ENCODE measurements at regions of chr11 and their contacts with region 1.

Region 1: GRCh38 chr11:106087815-106088435 is 10.5 kb downstream of the AASDHPPT start:
- DNase-seq: peak; percentile 70
- ATAC-seq: no peak
- H3K4me3 Mint-ChIP-seq: no peak overlapping the region
- H3K27ac Mint-ChIP-seq: no peak overlapping the region
- H3K4me1 Mint-ChIP-seq: peaks cover 64% of the 10 kb centered on the region
- H3K27me3 Mint-ChIP-seq: no peaks in the 10 kb centered on the region

Region 2: DNA sequence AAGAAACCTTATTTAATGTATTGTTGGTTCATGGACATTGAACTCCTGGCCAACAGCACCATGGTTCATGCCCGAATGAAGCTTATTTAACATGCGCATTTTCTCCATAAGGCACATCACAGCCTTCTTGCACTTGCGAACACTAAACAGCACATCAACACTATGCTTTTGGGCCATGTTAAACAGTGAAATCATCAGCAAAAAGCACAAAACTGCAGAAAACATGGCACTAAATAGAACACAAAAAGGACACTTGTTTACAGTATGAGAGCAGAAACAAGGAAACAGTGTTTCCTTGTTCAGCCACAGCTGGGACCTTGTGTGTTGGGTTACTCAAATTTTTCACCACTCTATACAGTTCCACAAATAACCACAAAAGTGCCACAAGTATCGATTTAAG is 188.2 kb before region 1 on chr11:
- CTCF ChIA-PET with region 1: no interaction called
- POLR2A ChIA-PET with region 1: no interaction called
- intact Hi-C with region 1: no loop called
- DNase-seq: no peak
- ATAC-seq: no peak
- H3K4me3 Mint-ChIP-seq: no peak overlapping the region
- H3K27ac Mint-ChIP-seq: no peak overlapping the region
- H3K4me1 Mint-ChIP-seq: no peaks in the 10 kb centered on the region
- H3K27me3 Mint-ChIP-seq: peaks cover 2% of the 10 kb centered on the region

Region 3: GRCh38 chr11:106021967-106022794 is 65.7 kb before region 1 on chr11 and contains the start of gene MSANTD4:
- CTCF ChIA-PET with region 1: no interaction called
- POLR2A ChIA-PET with region 1: no interaction called
- intact Hi-C with region 1: loop called in 1 of 2 experiments (anchors 5 kb)
- DNase-seq: peak; percentile 98
- ATAC-seq: peak; percentile 98
- H3K4me3 Mint-ChIP-seq: peak within 1 kb of the TSS; percentile 91
- H3K27ac Mint-ChIP-seq: peak within 1 kb of the TSS; percentile 88
- H3K4me1 Mint-ChIP-seq: peaks cover 35% of the 10 kb centered on the region
- H3K27me3 Mint-ChIP-seq: peaks cover 2% of the 10 kb centered on the region
- total RNA-seq, gene MSANTD4: 12.4 to 13.1 TPM

Region 4: DNA sequence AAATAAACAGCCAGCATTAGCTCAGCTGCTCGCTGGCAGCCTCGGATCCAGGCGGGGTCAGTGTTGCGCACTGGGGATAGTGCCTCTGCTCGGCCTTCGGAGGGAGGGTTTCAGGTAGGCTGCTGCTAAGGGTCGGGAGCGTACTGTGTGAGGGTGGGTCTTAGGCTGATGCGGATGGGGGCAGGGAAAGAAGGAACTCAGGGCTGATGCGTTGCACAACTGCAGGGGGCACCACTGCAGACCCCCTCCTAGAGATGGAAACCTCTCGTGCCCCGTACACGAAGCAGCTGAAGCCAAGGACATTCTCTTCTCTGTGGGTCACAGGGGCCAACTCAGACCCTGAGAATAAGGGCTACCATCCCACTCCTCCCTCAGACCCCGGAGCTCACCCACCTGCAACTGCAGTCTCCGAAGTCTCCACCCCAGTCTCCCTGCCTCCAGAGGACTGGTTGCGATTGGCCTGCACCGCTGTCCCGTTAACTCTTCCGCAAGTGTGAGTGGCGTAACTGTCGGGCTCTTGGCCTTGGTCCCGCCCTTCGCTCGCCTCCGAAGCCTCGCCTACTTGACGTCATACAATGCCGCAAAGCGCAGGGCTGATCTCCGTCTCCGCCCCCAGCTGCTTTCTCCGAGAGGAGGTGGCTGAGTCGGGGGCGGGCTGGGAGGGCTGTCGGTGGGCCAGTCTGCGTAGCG is 10.9 kb before region 1 on chr11 and contains the start of gene KBTBD3:
- CTCF ChIA-PET with region 1: interaction called, 8 read pairs
- POLR2A ChIA-PET with region 1: interaction called, 4 read pairs
- intact Hi-C with region 1: loop called (anchors 1 kb)
- DNase-seq: peak; percentile 99
- ATAC-seq: peak; percentile 97
- H3K4me3 Mint-ChIP-seq: peak within 1 kb of the TSS; percentile 87
- H3K27ac Mint-ChIP-seq: peak within 1 kb of the TSS; percentile 91
- H3K4me1 Mint-ChIP-seq: peaks cover 45% of the 10 kb centered on the region
- H3K27me3 Mint-ChIP-seq: no peaks in the 10 kb centered on the region
- total RNA-seq, gene KBTBD3: 8.9 to 9.1 TPM

Region 5: GRCh38 chr11:106133529-106133928 is 45.6 kb after region 1 on chr11:
- CTCF ChIA-PET with region 1: no interaction called
- POLR2A ChIA-PET with region 1: no interaction called
- intact Hi-C with region 1: loop called in 1 of 2 experiments (anchors 2 kb)
- DNase-seq: no peak
- ATAC-seq: no peak
- H3K4me3 Mint-ChIP-seq: no peak overlapping the region
- H3K27ac Mint-ChIP-seq: no peak overlapping the region
- H3K4me1 Mint-ChIP-seq: no peaks in the 10 kb centered on the region
- H3K27me3 Mint-ChIP-seq: peaks cover 19% of the 10 kb centered on the region

Region 6: GRCh38 chr11:107043242-107044006 is 955.5 kb after region 1 on chr11:
- CTCF ChIA-PET with region 1: no interaction called
- POLR2A ChIA-PET with region 1: no interaction called
- intact Hi-C with region 1: loop called in 1 of 2 experiments (anchors 5 kb)
- DNase-seq: no peak
- ATAC-seq: no peak
- H3K4me3 Mint-ChIP-seq: no peak overlapping the region
- H3K27ac Mint-ChIP-seq: no peak overlapping the region
- H3K4me1 Mint-ChIP-seq: no peaks in the 10 kb centered on the region
- H3K27me3 Mint-ChIP-seq: no peaks in the 10 kb centered on the region